ENCODE measurements at regions of chr16 and their contacts with region 1.

Region 1: DNA sequence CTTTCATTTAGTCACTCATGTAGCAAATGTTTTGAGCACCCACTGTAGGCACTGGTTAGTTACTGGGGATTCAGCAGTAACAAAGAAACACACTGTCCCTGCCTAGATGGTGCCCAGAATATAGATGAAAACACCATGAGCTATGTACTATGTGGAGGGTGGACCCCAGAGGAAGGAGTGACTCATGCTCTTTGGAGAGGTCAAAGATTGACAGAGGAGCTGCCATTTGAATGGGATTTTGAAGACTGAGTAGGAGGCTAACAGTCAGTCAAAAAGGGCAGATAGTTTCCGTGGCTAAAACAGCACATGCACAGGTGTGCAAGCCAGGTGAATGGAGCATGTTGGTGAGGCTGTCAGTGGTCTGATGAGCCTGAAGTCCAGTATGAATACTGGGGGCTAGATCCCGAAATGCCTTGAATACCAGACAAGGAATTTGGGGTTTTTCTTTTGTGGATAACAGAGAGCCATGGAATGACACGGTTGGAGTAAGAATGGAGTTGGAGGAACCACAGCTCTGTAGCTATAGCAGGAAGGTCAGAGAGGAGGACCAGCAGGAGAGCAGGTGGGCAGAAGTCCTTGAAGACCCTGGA is 6.1 kb downstream of the IL21R start:
- DNase-seq: peak in 3 of 9 donors; percentile 21 to 57 (median 56)
- ATAC-seq: peak; percentile 38
- H3K4me3 ChIP-seq: peak overlapping the region; percentile 10
- H3K4me3 Mint-ChIP-seq: peak overlapping the region; percentile 17 to 99 (median 91)
- H3K27ac ChIP-seq: peak overlapping the region; percentile 91
- H3K27ac Mint-ChIP-seq: peak overlapping the region; percentile 67 to 99 (median 97)
- H3K4me1 ChIP-seq: peaks cover 58 to 59% of the 10 kb centered on the region in 2 donors
- H3K4me1 Mint-ChIP-seq: peaks cover 63 to 97% (median 91%) of the 10 kb centered on the region in 7 donors
- H3K27me3 ChIP-seq: no peaks in the 10 kb centered on the region
- H3K27me3 Mint-ChIP-seq: no peaks in the 10 kb centered on the region

Region 2: GRCh38 chr16:27374804-27375425 is 33.2 kb before region 1 on chr16:
- CTCF ChIA-PET with region 1: interaction called, 5 read pairs
- POLR2A ChIA-PET with region 1: interaction called, 30 read pairs
- intact Hi-C with region 1: loop called in 1 of 2 experiments (anchors 2 kb)
- DNase-seq: peak in 1 of 9 donors; percentile 50
- ATAC-seq: peak; percentile 64
- H3K4me3 ChIP-seq: no peak overlapping the region
- H3K4me3 Mint-ChIP-seq: no peak overlapping the region
- H3K27ac ChIP-seq: peak overlapping the region; percentile 53
- H3K27ac Mint-ChIP-seq: no peak overlapping the region
- H3K4me1 ChIP-seq: peaks cover 32 to 71% of the 10 kb centered on the region in 2 donors
- H3K4me1 Mint-ChIP-seq: peaks cover 29 to 53% (median 45%) of the 10 kb centered on the region in 7 donors
- H3K27me3 ChIP-seq: no peaks in the 10 kb centered on the region
- H3K27me3 Mint-ChIP-seq: no peaks in the 10 kb centered on the region

Region 3: DNA sequence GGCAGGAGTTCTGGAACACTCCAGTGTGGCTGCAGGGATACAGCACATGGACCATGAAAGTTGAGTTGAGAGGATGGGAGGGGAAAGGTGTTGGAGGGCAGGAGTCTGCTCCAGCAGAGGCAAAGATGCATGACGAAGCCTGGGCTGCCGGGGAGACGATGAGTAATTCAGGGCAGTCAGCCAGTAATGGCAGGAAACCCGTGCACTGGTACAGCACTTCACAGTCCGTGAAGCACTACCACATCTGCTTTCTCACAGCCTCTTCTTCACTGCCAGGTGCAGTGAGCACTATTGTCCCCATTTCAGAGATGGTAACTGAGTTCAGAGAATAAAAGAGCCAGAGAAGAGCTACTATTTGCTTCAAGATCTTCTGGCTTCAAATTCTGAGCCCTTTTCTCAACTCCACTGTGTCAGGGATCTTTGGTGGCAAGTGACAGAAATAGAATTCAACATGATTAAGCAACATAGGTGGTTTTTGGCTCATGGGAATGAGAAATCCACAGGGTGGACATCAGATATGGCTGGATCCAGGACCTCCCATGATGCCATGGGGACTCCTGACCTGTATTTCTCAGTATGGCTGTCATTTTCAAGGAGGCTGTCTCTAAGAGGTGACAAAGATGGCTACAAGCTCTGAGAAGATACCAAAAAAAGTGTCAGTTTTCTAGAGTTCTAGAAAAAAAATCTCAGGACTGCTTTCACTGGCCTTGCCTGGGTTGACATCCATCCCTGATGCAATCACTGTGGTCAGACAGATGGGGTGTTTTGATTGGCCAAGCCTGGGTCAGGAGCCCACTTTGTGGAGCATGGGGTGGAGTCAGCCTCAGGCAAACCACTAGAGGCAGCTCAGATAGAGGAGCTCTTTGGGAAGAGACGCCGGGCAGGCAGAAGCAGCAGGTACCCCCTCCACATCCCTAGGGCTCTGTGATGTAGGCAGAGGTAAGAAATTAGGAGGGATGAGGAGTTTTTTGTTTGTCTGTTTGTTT is 18.6 kb after region 1 on chr16:
- CTCF ChIA-PET with region 1: interaction called, 3 read pairs
- POLR2A ChIA-PET with region 1: interaction called, 12 read pairs
- intact Hi-C with region 1: loop called (anchors 1 to 2 kb)
- DNase-seq: peak in 8 of 9 donors; percentile 25 to 68 (median 55)
- ATAC-seq: peak; percentile 93
- H3K4me3 ChIP-seq: no peak overlapping the region
- H3K4me3 Mint-ChIP-seq: peak overlapping the region in 9 of 10 donors; percentile 9 to 70 (median 18)
- H3K27ac ChIP-seq: peak overlapping the region; percentile 22
- H3K27ac Mint-ChIP-seq: peak overlapping the region; percentile 30 to 86 (median 72)
- H3K4me1 ChIP-seq: peaks cover 15 to 21% of the 10 kb centered on the region in 2 donors
- H3K4me1 Mint-ChIP-seq: peaks cover 29 to 78% (median 62%) of the 10 kb centered on the region in 7 donors
- H3K27me3 ChIP-seq: no peaks in the 10 kb centered on the region
- H3K27me3 Mint-ChIP-seq: no peaks in the 10 kb centered on the region

Region 4: GRCh38 chr16:27455700-27456099 is 47.6 kb after region 1 on chr16:
- CTCF ChIA-PET with region 1: interaction called, 3 read pairs
- POLR2A ChIA-PET with region 1: interaction called, 4 read pairs
- intact Hi-C with region 1: loop called (anchors 2 kb)
- DNase-seq: peak in 6 of 9 donors; percentile 22 to 47 (median 32)
- ATAC-seq: peak; percentile 18
- H3K4me3 ChIP-seq: no peak overlapping the region
- H3K4me3 Mint-ChIP-seq: peak overlapping the region in 9 of 10 donors; percentile 3 to 75 (median 23)
- H3K27ac ChIP-seq: no peak overlapping the region
- H3K27ac Mint-ChIP-seq: peak overlapping the region; percentile 54 to 87 (median 79)
- H3K4me1 ChIP-seq: peaks cover 24 to 46% of the 10 kb centered on the region in 2 donors
- H3K4me1 Mint-ChIP-seq: peaks cover 30 to 75% (median 51%) of the 10 kb centered on the region in 7 donors
- H3K27me3 ChIP-seq: no peaks in the 10 kb centered on the region
- H3K27me3 Mint-ChIP-seq: no peaks in the 10 kb centered on the region